ENCODE measurements at regions of chr1 and their contacts with region 1.

Region 1: DNA sequence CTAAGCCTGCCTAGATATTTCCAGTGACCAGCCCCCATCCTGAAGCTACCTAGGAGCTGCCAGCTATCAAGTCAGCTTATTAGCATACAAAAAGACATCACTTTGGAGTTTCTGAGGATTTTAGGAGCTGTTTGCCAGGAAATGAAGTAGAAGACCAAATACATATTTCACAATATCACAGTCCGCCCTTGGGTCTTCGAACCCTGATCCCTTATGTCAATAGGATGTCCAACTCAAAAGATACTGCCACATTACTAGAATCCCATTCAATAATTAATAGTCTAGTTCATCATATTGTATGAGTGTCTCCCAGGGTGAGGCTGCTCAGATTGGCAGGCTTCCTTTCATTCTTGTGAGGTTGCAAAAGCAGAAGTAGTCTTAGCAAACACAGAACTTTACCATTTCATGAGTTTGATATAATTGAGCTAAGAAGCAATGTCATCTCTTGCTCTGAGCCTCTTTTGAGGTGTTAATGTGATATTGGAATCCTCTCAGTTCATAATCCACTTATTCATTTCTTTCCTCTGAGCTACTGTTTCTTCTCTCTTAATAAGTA is 13.6 kb downstream of the IPO9 start:
- DNase-seq: no peak
- H3K4me3 ChIP-seq: no peak overlapping the region
- H3K27ac ChIP-seq: 0 out of 4 replicates have a peak overlapping the region, but pooled peaks of 1 of the 2 experiments have one; percentile 0
- H3K4me1 ChIP-seq: peaks cover 0 to 12% of the 10 kb centered on the region in 2 experiments; a peak in 2 of 4 replicates
- H3K27me3 ChIP-seq: no peaks in the 10 kb centered on the region
- CTCF ChIP-seq: no peak
- EP300 ChIP-seq: no peak
- RAD21 ChIP-seq: no peak

Region 2: GRCh38 chr1:201828820-201829774 is 13.5 kb before region 1 on chr1 and contains the start of gene IPO9:
- CTCF ChIA-PET with region 1: interaction called, 11 read pairs
- POLR2A ChIA-PET with region 1: no interaction called
- DNase-seq: peak; percentile 99
- H3K4me3 ChIP-seq: peak within 1 kb of the TSS; percentile 92 to 97
- H3K27ac ChIP-seq: peak within 1 kb of the TSS; percentile 93 to 95
- H3K4me1 ChIP-seq: peaks cover 12 to 41% of the 10 kb centered on the region in 2 experiments
- H3K27me3 ChIP-seq: no peaks in the 10 kb centered on the region
- CTCF ChIP-seq: peak; percentile 92
- EP300 ChIP-seq: no peak; a peak in 1 of 4 replicates
- RAD21 ChIP-seq: peak; percentile 40
- polyA plus RNA-seq, gene IPO9: 24.5 and 30.7 TPM in 2 replicates

Measured in SK-N-SH (cell line).